HepG2 (cell line): ENCODE measurements at regions of chr2 and their contacts with region 1.

Region 1: GRCh38 chr2:47767880-47768609 is 14.9 kb upstream of the MSH6 start:
- DNase-seq: peak; percentile 27
- ATAC-seq: peak; percentile 94
- H3K4me3 ChIP-seq: peak overlapping the region in 1 of 3 experiments; percentile 38; a peak in 1 of 6 replicates
- H3K27ac ChIP-seq: no peak overlapping the region
- H3K4me1 ChIP-seq: peaks cover 6% of the 10 kb centered on the region; the same call in 1 of the 2 replicates
- H3K27me3 ChIP-seq: peaks cover 0 to 8% of the 10 kb centered on the region in 2 experiments; a peak in 2 of 5 replicates
- CTCF ChIP-seq: peak; percentile 99
- EP300 ChIP-seq: no peak
- POLR2A ChIP-seq: no peak
- RAD21 ChIP-seq: peak; percentile 98

Region 2: GRCh38 chr2:46984642-46985476 is 783.2 kb before region 1 on chr2:
- CTCF ChIA-PET with region 1: no interaction called
- POLR2A ChIA-PET with region 1: no interaction called
- in situ Hi-C with region 1: no loop called
- intact Hi-C with region 1: no loop called
- DNase-seq: no peak
- ATAC-seq: no peak
- H3K4me3 ChIP-seq: no peak overlapping the region
- H3K27ac ChIP-seq: no peak overlapping the region
- H3K4me1 ChIP-seq: peaks cover 54% of the 10 kb centered on the region
- H3K27me3 ChIP-seq: no peaks in the 10 kb centered on the region
- CTCF ChIP-seq: no peak
- EP300 ChIP-seq: no peak
- POLR2A ChIP-seq: no peak
- RAD21 ChIP-seq: no peak

Region 3: DNA sequence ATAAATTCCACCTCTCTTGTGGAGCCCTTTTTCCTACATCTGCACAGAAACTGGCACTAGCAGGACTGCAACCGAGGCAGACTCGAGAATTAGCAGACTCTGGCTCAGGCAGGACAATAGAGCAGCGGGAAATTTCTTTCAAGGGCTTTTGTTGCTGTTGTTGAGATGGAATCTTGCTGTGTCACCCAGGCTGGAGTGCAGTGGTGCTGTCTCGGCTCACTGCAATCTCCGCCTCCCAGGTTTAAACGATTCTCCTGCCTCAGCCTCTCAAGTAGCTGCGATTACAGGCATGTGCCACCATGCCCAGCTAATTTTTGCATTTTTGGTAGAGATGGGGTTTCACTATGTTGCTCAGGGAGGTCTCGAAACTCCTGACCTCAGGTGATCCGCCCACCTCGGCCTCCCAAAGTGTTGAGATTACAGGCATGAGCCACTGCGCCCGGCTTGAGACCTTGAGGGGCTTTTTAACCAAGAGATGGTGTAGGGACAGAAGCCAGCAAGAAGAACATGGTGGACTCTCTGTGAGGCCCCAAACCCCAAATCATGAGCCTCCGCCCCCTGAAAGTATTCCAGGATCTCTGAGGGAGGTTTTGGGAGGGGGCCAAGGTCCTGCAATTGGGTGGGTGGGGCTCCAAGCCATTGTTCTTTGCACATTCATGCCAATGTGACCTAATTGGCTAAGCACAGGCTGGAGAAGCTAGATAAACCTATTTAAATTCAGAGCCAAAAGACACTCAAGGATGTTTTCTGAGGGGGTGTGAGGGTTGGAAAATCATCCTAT is 433.5 kb before region 1 on chr2:
- CTCF ChIA-PET with region 1: no interaction called
- POLR2A ChIA-PET with region 1: interaction called, 4 read pairs
- in situ Hi-C with region 1: loop called (anchors 10 kb)
- intact Hi-C with region 1: loop called (anchors 1 kb)
- DNase-seq: no peak
- ATAC-seq: no peak
- H3K4me3 ChIP-seq: no peak overlapping the region
- H3K27ac ChIP-seq: no peak overlapping the region
- H3K4me1 ChIP-seq: peaks cover 19% of the 10 kb centered on the region
- H3K27me3 ChIP-seq: no peaks in the 10 kb centered on the region
- CTCF ChIP-seq: no peak
- EP300 ChIP-seq: no peak
- POLR2A ChIP-seq: no peak
- RAD21 ChIP-seq: no peak

Region 4: DNA sequence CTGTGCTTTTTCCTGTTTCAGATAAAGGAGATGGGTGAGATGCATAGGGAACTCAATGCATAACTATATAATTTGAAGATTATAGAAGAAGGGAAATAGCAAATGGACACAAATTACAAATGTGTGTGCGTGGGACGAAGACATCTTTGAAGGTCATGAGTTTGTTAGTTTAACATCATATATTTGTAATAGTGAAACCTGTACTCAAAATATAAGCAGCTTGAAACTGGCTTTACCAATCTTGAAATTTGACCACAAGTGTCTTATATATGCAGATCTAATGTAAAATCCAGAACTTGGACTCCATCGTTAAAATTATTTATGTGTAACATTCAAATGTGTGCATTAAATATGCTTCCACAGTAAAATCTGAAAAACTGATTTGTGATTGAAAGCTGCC is 381.5 kb before region 1 on chr2:
- CTCF ChIA-PET with region 1: interaction called, 6 read pairs
- POLR2A ChIA-PET with region 1: interaction called, 3 read pairs
- in situ Hi-C with region 1: no loop called
- intact Hi-C with region 1: loop called (anchors 5 kb)
- DNase-seq: no peak
- ATAC-seq: no peak
- H3K4me3 ChIP-seq: no peak overlapping the region
- H3K27ac ChIP-seq: no peak overlapping the region
- H3K4me1 ChIP-seq: peaks cover 10% of the 10 kb centered on the region
- H3K27me3 ChIP-seq: no peaks in the 10 kb centered on the region
- CTCF ChIP-seq: no peak
- EP300 ChIP-seq: no peak
- POLR2A ChIP-seq: no peak
- RAD21 ChIP-seq: no peak

Region 5: DNA sequence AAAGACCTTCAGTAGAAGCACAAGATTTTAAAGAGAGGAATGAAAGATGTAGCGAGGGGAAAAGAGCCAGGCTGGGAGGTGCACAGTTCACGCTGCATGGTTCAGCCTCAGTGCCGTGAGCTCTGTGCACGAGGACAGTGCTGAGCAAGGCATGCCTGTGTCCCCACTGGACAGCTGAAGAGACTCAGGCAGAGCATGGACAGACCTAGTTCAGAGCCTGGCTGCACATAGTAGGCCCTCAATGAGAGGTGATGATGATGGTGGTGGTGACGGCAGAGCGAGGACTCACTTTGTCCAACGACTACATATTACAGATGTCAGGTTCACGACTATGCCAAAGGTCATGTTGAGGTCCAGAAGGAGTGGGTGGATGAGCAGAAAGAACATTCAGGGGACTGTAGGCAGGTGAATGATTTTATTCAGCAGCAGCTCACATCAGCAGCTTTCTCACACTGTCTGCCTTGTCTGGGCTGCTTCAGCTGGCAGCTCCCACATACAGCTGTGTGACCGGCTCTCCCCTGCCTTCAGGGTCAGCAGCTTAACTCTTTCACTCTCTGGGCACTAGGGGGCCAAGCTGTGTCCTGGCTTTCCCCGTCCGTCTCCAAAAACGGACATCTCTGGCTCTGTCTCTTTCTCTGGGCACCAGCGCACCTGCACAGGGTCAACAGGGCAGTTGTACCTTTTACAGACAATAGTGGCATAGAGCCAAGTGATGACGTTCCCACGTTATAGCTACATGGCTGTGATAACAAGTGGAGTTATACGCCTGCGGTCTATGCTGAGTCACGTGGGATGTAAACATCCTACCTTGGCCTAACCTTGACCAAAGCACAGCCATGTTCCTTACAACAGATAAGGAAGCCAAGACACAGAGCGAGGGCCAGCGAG is 113.9 kb before region 1 on chr2:
- CTCF ChIA-PET with region 1: interaction called, 17 read pairs
- POLR2A ChIA-PET with region 1: no interaction called
- in situ Hi-C with region 1: loop called (anchors 5 kb)
- intact Hi-C with region 1: loop called (anchors 1 kb)
- DNase-seq: peak; percentile 42
- ATAC-seq: peak; percentile 94
- H3K4me3 ChIP-seq: no peak overlapping the region
- H3K27ac ChIP-seq: no peak overlapping the region
- H3K4me1 ChIP-seq: peaks cover 12% of the 10 kb centered on the region
- H3K27me3 ChIP-seq: peaks cover 8 to 59% of the 10 kb centered on the region in 2 experiments; a peak in 4 of 5 replicates
- CTCF ChIP-seq: peak; percentile 70
- EP300 ChIP-seq: no peak
- POLR2A ChIP-seq: no peak
- RAD21 ChIP-seq: peak; percentile 55; the same call in 1 of the 2 replicates

Region 6: DNA sequence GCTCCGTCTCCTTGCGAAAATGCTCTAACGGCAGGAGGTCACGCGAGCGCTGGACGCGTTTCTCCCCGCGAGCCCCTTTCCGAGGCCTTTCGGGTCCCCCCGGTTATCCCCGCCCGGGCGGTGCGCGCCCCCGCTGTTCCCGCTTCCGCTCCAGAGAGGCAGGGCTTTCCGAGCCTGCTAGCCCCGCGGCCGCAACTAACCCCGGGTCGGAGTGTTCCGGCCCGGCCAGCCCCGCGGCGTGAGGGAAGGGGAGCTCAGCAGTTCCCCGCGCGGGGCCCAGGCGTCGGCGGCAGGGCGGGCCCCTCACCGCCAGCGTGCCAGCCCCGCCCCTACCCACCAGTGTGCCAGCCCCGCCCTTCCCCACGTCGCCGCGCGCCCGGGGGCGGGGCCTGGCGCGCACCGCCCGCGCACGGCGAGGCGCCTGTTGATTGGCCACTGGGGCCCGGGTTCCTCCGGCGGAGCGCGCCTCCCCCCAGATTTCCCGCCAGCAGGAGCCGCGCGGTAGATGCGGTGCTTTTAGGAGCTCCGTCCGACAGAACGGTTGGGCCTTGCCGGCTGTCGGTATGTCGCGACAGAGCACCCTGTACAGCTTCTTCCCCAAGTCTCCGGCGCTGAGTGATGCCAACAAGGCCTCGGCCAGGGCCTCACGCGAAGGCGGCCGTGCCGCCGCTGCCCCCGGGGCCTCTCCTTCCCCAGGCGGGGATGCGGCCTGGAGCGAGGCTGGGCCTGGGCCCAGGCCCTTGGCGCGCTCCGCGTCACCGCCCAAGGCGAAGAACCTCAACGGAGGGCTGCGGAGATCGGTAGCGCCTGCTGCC is 14.8 kb after region 1 on chr2 and contains the start of gene MSH6:
- CTCF ChIA-PET with region 1: interaction called, 3 read pairs
- POLR2A ChIA-PET with region 1: interaction called, 11 read pairs
- in situ Hi-C with region 1: no loop called
- intact Hi-C with region 1: no loop called
- DNase-seq: peak; percentile 85
- ATAC-seq: peak; percentile 87
- H3K4me3 ChIP-seq: peak within 1 kb of the TSS; percentile 77 to 85 (median 82)
- H3K27ac ChIP-seq: peak within 1 kb of the TSS; percentile 93
- H3K4me1 ChIP-seq: peaks cover 50% of the 10 kb centered on the region
- H3K27me3 ChIP-seq: peaks cover 0 to 11% of the 10 kb centered on the region in 2 experiments; a peak in 3 of 5 replicates
- CTCF ChIP-seq: no peak; the same call in 1 of the 2 replicates
- EP300 ChIP-seq: no peak
- POLR2A ChIP-seq: peak; percentile 83 to 86
- RAD21 ChIP-seq: peak; percentile 40; the same call in 1 of the 2 replicates
- total RNA-seq, gene MSH6: 113 and 168 TPM in 2 replicates